Activated T-helper 1 cell treated with anti-CD3 and anti-CD28 coated beads, Interleukin-12 subunit alpha, Interleukin-12 subunit beta, Interleukin-2, Interleukin-4 antibody, amounts not matched to agents 30 ng/mL and 10 ng/mL and 1 ng/mL, durations not matched to agents 14 hours and 24 hours and 36 hours (primary cell): ENCODE measurements at regions of chr18 and their contacts with region 1.

Region 1: GRCh38 chr18:42025974-42026625 is 71.1 kb downstream of the PIK3C3 start:
- DNase-seq: no peak
- H3K4me3 Mint-ChIP-seq: no peak overlapping the region
- H3K27ac Mint-ChIP-seq: no peak overlapping the region
- H3K4me1 Mint-ChIP-seq: peaks cover 29% of the 10 kb centered on the region
- H3K27me3 Mint-ChIP-seq: no peaks in the 10 kb centered on the region

Region 2: GRCh38 chr18:41982942-41983660 is 43.0 kb before region 1 on chr18:
- intact Hi-C with region 1: loop called (anchors 1 kb)
- DNase-seq: no peak
- H3K4me3 Mint-ChIP-seq: no peak overlapping the region
- H3K27ac Mint-ChIP-seq: peak overlapping the region; percentile 90
- H3K4me1 Mint-ChIP-seq: peaks cover 23% of the 10 kb centered on the region
- H3K27me3 Mint-ChIP-seq: no peaks in the 10 kb centered on the region